WTC11 (cell line): ENCODE measurements at regions of chr3 and their contacts with region 1.

Region 1: GRCh38 chr3:32794487-32795308 is 23.1 kb upstream of the TRIM71 start:
- DNase-seq: no peak
- ATAC-seq: peak; percentile 51
- H3K4me3 Mint-ChIP-seq: no peak overlapping the region
- H3K27ac Mint-ChIP-seq: no peak overlapping the region
- H3K4me1 Mint-ChIP-seq: peaks cover 37% of the 10 kb centered on the region
- H3K27me3 Mint-ChIP-seq: peaks cover 4% of the 10 kb centered on the region; the same call in 1 of the 2 replicates
- CTCF ChIP-seq: no peak

Region 2: DNA sequence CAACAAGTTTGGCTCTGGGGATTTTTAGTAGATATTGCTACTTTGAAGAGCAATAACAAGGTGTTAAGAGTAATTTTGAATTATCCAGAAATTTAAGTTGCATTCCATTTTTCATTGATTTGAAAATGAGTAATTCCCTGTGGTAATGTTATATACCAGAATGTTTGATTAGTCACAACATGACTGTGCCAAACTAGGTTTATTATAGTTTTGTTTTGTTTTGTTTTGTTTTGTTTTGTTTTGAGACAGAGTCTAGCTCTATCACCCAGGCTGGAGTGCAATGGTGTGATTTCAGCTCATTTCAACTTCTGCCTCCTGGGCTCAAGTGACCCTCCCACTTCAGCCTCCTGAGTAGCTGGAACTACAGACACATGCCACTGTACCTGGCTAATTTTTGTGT is 69.0 kb before region 1 on chr3:
- CTCF ChIA-PET with region 1: no interaction called
- POLR2A ChIA-PET with region 1: interaction called, 11 read pairs
- DNase-seq: no peak
- ATAC-seq: no peak
- H3K4me3 Mint-ChIP-seq: no peak overlapping the region
- H3K27ac Mint-ChIP-seq: peak overlapping the region; percentile 36; the same call in 1 of the 2 replicates
- H3K4me1 Mint-ChIP-seq: peaks cover 13% of the 10 kb centered on the region
- H3K27me3 Mint-ChIP-seq: no peaks in the 10 kb centered on the region
- CTCF ChIP-seq: no peak

Region 3: GRCh38 chr3:32865405-32865804 is 70.7 kb after region 1 on chr3:
- CTCF ChIA-PET with region 1: no interaction called
- POLR2A ChIA-PET with region 1: no interaction called
- DNase-seq: no peak
- ATAC-seq: no peak
- H3K4me3 Mint-ChIP-seq: peak overlapping the region; percentile 46; the same call in 1 of the 2 replicates
- H3K27ac Mint-ChIP-seq: peak overlapping the region; percentile 98
- H3K4me1 Mint-ChIP-seq: peaks cover 95% of the 10 kb centered on the region
- H3K27me3 Mint-ChIP-seq: no peaks in the 10 kb centered on the region
- CTCF ChIP-seq: no peak